Activated T-helper 2 cell treated with anti-CD3 and anti-CD28 coated beads, Interferon-gamma antibody, Interleukin-2, Interleukin-4, amounts not matched to agents 10 μg/mL and 5 μg/mL and 100 μg/mL, durations not matched to agents 14 hours and 24 hours and 36 hours (primary cell): ENCODE measurements at regions of chr15 and their contacts with region 1.

Region 1: DNA sequence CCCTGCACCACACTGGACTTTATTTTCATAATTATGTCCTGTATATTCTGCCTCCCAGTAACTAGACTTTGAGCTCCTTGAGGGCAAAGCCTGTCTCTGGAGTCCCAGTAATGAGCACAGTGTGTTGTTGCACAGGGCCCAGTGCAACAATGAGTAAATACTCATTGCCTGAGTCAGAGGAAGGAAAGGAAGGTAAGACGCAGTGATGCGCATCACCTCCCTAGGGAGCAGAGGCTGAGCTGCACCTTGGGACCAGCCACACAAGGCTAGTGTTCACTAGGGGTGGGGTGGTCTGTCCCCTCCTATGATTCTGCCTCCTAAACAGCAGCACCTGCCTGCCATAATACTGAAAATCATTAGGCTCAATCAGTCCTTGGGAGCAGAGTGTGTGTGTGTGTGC is 86.6 kb upstream of the ADAMTSL3 start:
- DNase-seq: no peak
- H3K4me3 Mint-ChIP-seq: no peak overlapping the region
- H3K27ac Mint-ChIP-seq: no peak overlapping the region
- H3K4me1 Mint-ChIP-seq: no peaks in the 10 kb centered on the region
- H3K27me3 Mint-ChIP-seq: peaks cover 4% of the 10 kb centered on the region

Region 2: DNA sequence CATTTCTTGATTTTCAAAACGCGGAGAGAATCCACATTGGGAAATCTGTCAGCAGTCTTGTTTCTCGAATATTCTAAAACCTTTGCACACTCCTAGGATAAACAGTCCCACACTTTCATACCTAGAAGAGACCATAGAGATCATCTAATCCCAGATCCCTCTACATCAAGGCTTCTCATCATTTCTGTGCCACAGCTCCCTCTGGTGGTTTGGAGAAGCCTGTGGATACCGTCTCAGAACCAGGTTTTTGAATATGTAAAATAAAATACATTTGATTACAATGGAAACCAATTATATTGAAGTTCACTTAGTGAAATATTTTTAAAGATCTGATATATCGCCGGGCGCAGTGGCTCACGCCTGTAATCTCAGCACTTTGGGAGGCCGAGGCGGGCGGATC is 456.3 kb after region 1 on chr15:
- intact Hi-C with region 1: loop called (anchors 1 kb)
- DNase-seq: no peak
- H3K4me3 Mint-ChIP-seq: no peak overlapping the region
- H3K27ac Mint-ChIP-seq: no peak overlapping the region
- H3K4me1 Mint-ChIP-seq: no peaks in the 10 kb centered on the region
- H3K27me3 Mint-ChIP-seq: peaks cover 4% of the 10 kb centered on the region

Region 3: GRCh38 chr15:84035399-84035766 is 468.1 kb after region 1 on chr15:
- intact Hi-C with region 1: loop called (anchors 5 kb)
- DNase-seq: no peak
- H3K4me3 Mint-ChIP-seq: no peak overlapping the region
- H3K27ac Mint-ChIP-seq: no peak overlapping the region
- H3K4me1 Mint-ChIP-seq: no peaks in the 10 kb centered on the region
- H3K27me3 Mint-ChIP-seq: peaks cover 7% of the 10 kb centered on the region